ENCODE measurements at regions of chrX and their contacts with region 1.

Region 1: GRCh38 chrX:24081661-24082264 is 27.0 kb downstream of the EIF2S3 start:
- DNase-seq: peak; percentile 70
- H3K4me3 Mint-ChIP-seq: no peak overlapping the region
- H3K27ac Mint-ChIP-seq: no peak overlapping the region
- H3K4me1 Mint-ChIP-seq: peaks cover 16% of the 10 kb centered on the region
- H3K27me3 Mint-ChIP-seq: no peaks in the 10 kb centered on the region

Region 2: DNA sequence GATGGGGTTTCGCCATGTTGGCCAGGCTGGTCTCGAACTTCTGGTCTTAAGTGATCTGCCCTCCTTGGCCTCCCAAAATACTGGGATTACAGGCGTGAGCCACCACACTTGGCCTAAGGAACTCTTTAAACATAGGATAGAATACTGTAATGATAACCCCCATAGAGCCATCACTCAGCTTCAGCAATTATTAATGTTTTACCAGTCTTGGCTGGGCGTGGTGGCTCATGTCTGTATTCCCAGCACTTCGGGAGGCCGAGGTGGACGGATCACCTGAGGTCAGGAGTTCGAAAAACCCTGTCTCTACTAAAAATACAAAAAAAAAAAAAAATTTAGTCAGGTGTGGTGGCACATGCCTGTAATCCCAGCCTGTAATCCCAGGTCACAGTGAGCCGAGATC is 11.9 kb before region 1 on chrX:
- CTCF ChIA-PET with region 1: no interaction called
- POLR2A ChIA-PET with region 1: no interaction called
- intact Hi-C with region 1: no loop called
- DNase-seq: no peak
- H3K4me3 Mint-ChIP-seq: no peak overlapping the region
- H3K27ac Mint-ChIP-seq: no peak overlapping the region
- H3K4me1 Mint-ChIP-seq: no peaks in the 10 kb centered on the region
- H3K27me3 Mint-ChIP-seq: no peaks in the 10 kb centered on the region

Region 3: GRCh38 chrX:24097741-24098260 is 16.0 kb after region 1 on chrX:
- CTCF ChIA-PET with region 1: no interaction called
- POLR2A ChIA-PET with region 1: interaction called, 3 read pairs
- intact Hi-C with region 1: loop called (anchors 2 kb)
- DNase-seq: no peak
- H3K4me3 Mint-ChIP-seq: no peak overlapping the region
- H3K27ac Mint-ChIP-seq: no peak overlapping the region
- H3K4me1 Mint-ChIP-seq: peaks cover 20% of the 10 kb centered on the region
- H3K27me3 Mint-ChIP-seq: no peaks in the 10 kb centered on the region

Region 4: GRCh38 chrX:24169211-24169610 is 87.4 kb after region 1 on chrX:
- CTCF ChIA-PET with region 1: interaction called, 3 read pairs
- POLR2A ChIA-PET with region 1: no interaction called
- intact Hi-C with region 1: loop called (anchors 1 kb)
- DNase-seq: no peak
- H3K4me3 Mint-ChIP-seq: peak overlapping the region; percentile 53
- H3K27ac Mint-ChIP-seq: peak overlapping the region; percentile 92
- H3K4me1 Mint-ChIP-seq: peaks cover 52% of the 10 kb centered on the region
- H3K27me3 Mint-ChIP-seq: no peaks in the 10 kb centered on the region